A549 (cell line): ENCODE measurements at regions of chr10 and their contacts with region 1.

Region 1: GRCh38 chr10:110210674-110211464 is 3.5 kb downstream of the MXI1 start:
- DNase-seq: peak; percentile 98 to 100
- ATAC-seq: peak; percentile 49 to 76
- H3K4me3 ChIP-seq: peak overlapping the region; percentile 64
- H3K27ac ChIP-seq: peak overlapping the region; percentile 82 to 90
- H3K4me1 ChIP-seq: peaks cover 20% of the 10 kb centered on the region
- CTCF ChIP-seq: no peak
- EP300 ChIP-seq: no peak
- POLR2A ChIP-seq: no peak
- RAD21 ChIP-seq: no peak

Region 2: GRCh38 chr10:110007701-110008517 is 203.0 kb before region 1 on chr10 and contains the start of gene ADD3:
- CTCF ChIA-PET with region 1: no interaction called
- POLR2A ChIA-PET with region 1: interaction called, 11 read pairs
- DNase-seq: peak; percentile 74 to 86
- ATAC-seq: peak; percentile 73 to 85
- H3K4me3 ChIP-seq: peak within 1 kb of the TSS; percentile 85
- H3K27ac ChIP-seq: peak within 1 kb of the TSS; percentile 70 to 88
- H3K4me1 ChIP-seq: peaks cover 24% of the 10 kb centered on the region
- CTCF ChIP-seq: no peak
- EP300 ChIP-seq: no peak
- POLR2A ChIP-seq: peak; percentile 88
- RAD21 ChIP-seq: no peak
- polyA plus RNA-seq, gene ADD3: 48.2 and 49.1 TPM in 2 replicates

Region 3: GRCh38 chr10:110192552-110192951 is 18.3 kb before region 1 on chr10:
- CTCF ChIA-PET with region 1: interaction called, 24 read pairs
- POLR2A ChIA-PET with region 1: no interaction called
- DNase-seq: no peak
- ATAC-seq: no peak; a peak in 1 of 6 replicates
- H3K4me3 ChIP-seq: no peak overlapping the region
- H3K27ac ChIP-seq: no peak overlapping the region
- H3K4me1 ChIP-seq: 0 out of 3 replicates have a peak, but pooled peaks cover 6% of the 10 kb centered on the region
- CTCF ChIP-seq: no peak
- EP300 ChIP-seq: no peak
- POLR2A ChIP-seq: no peak
- RAD21 ChIP-seq: no peak

Region 4: DNA sequence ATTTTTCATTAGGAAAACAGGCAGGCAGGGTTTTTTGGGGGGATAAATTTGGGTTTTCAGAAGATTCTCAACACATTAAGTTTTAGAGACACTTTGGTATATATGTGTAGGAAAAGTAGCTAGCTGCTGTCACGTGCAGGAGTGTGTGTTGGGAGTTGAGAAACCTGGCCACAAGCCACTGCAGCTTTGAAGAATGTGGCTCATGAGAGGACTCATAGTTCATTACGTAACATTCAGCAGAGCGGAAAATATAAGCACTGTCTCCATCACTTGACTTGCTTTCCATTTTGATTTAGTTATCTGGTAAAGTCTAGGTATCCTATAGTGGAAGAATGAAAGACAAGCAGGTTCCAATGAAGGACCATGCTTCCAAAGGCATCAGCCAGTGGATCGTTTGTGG is 62.6 kb after region 1 on chr10:
- CTCF ChIA-PET with region 1: interaction called, 43 read pairs
- POLR2A ChIA-PET with region 1: interaction called, 10 read pairs
- DNase-seq: peak in 1 of 2 experiments; percentile 10
- ATAC-seq: no peak
- H3K4me3 ChIP-seq: no peak overlapping the region
- H3K27ac ChIP-seq: no peak overlapping the region
- H3K4me1 ChIP-seq: no peaks in the 10 kb centered on the region
- CTCF ChIP-seq: no peak
- EP300 ChIP-seq: no peak
- POLR2A ChIP-seq: no peak
- RAD21 ChIP-seq: no peak

Region 5: DNA sequence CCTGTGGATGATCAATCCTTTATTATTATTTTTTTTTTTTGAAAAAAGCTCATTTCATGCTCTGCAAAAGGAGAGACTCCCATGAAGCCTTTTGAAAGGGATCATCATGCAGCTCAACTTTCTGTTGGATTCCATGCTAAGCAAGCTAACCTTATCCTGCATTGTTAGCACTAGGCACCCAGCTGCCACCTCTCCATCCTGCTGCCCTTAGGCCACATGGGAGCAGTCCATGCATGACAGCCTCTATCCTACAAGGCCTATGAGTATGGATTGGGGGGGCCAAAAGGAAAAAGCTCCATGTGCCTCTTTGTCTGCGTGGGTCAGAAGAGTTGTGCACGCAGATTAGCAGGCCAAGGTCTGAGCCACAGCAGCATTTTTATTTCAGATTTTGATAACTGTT is 74.6 kb after region 1 on chr10:
- CTCF ChIA-PET with region 1: interaction called, 43 read pairs
- POLR2A ChIA-PET with region 1: interaction called, 3 read pairs
- DNase-seq: no peak
- ATAC-seq: peak; percentile 39 to 49; a peak in 2 of 6 replicates
- H3K4me3 ChIP-seq: no peak overlapping the region
- H3K27ac ChIP-seq: no peak overlapping the region
- H3K4me1 ChIP-seq: peaks cover 6% of the 10 kb centered on the region; the same call in 1 of the 3 replicates
- CTCF ChIP-seq: no peak
- EP300 ChIP-seq: no peak
- POLR2A ChIP-seq: no peak
- RAD21 ChIP-seq: no peak